Dorsolateral prefrontal cortex (tissue), 120 donors: ENCODE measurements at regions of chr6 and their contacts with region 1.

Region 1: DNA sequence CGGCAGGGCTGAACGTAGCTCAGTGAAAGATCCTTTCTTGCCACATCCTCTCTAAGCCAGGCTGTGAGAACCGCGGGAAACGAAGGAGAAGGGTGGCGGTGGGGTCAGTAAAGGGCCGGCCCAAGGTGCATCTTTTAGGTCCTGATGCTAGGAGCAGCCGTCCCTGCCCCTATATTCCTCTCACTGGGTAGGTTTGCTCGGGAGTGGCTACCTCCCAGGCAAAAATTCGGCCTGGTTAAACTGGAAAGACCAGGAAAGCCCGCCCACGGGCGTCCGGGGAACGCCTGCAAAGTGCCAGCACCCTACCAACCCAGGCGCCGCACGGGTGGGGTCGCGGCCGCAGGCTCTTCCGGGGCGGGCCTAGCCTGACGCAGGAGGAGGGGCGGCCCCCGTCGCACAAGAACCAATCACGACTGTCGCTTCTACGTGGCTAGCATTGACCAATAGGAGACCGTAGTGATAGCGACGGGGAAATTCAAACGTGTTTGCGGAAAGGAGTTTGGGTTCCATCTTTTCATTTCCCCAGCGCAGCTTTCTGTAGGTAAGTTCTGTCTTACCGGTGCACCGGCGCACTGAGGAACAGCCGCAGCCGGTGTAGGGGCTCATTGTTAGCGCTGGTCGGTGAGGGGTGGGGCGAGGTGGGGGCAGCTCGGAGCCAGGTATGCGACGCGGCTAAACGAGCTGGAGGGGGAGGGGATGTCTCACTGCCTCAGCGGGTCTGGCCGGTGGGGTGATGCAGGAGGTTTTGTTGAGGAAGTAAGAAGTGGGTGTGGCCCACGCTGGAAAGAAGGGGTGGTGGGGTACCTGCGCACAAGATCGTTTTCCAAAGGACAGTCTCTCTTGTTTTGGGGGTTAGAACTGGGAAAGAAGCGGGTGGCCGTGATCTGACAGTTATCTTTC is at the start of gene TTK:
- DNase-seq: peak; percentile 76 to 95 (median 92)
- H3K4me3 ChIP-seq: peak within 1 kb of the TSS; percentile 55 to 91 (median 79)
- H3K27ac ChIP-seq: peak within 1 kb of the TSS in 55 of 59 donors; percentile 1 to 91 (median 80)
- H3K27me3 ChIP-seq: peaks cover 0 to 3% (median 0%) of the 10 kb centered on the region in 45 donors
- CTCF ChIP-seq: peak in 7 of 56 donors; percentile 4 to 33 (median 16)
- total RNA-seq, gene TTK: 0.15 to 1.6 (median 0.45) TPM in 75 of 120 experiments, not detected in the others

Region 2: GRCh38 chr6:79841577-79842375 is 162.6 kb before region 1 on chr6:
- intact Hi-C with region 1: no loop called
- DNase-seq: no peak
- H3K4me3 ChIP-seq: no peak overlapping the region
- H3K27ac ChIP-seq: no peak overlapping the region
- H3K27me3 ChIP-seq: no peaks in the 10 kb centered on the region
- CTCF ChIP-seq: peak in 1 of 56 donors; percentile 21

Region 3: DNA sequence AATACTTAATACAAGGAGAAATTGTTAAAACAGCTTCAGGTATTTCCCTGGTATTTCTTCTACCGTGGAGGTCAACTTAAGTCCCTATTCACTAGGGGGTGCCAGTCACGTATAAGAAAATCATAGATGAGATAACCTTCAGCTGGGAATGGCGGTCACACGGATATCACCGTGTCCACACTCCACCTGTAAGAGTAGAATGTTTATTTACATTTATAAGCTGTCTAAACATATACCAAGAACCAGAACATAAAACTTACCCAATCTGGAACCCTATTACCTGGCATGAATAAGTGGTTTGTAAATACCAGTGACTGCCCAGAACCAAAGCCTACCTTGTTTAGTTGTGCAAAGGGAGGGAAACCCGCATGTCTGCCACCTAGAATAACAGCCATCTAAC is 55.2 kb before region 1 on chr6:
- intact Hi-C with region 1: loop called (anchors 5 kb)
- DNase-seq: peak in 3 of 10 donors; percentile 24 to 47 (median 32)
- H3K4me3 ChIP-seq: no peak overlapping the region
- H3K27ac ChIP-seq: no peak overlapping the region
- H3K27me3 ChIP-seq: no peaks in the 10 kb centered on the region
- CTCF ChIP-seq: peak in 55 of 56 donors; percentile 16 to 72 (median 53)

Region 4: DNA sequence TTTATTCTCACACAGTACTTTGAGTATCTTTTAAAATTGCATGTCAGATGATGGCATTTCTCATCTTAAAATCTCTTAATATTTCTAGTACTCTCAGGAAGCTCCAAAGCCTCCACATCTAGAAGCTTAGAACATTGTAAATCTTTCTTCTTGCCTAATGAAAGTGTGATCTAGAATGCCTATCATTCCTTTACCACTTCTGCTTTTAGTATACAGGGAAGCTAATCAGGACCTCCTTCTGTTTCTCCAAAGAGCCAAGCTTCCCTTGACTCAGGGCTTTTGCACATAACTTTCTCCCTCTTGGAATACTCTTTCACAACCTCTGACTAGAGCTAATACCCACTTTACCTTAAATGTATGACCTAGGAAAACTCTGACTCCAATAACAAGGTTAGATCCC is 49.6 kb before region 1 on chr6:
- intact Hi-C with region 1: loop called in 1 of 2 experiments (anchors 5 kb)
- DNase-seq: no peak
- H3K4me3 ChIP-seq: no peak overlapping the region
- H3K27ac ChIP-seq: no peak overlapping the region
- H3K27me3 ChIP-seq: no peaks in the 10 kb centered on the region
- CTCF ChIP-seq: no peak

Region 5: DNA sequence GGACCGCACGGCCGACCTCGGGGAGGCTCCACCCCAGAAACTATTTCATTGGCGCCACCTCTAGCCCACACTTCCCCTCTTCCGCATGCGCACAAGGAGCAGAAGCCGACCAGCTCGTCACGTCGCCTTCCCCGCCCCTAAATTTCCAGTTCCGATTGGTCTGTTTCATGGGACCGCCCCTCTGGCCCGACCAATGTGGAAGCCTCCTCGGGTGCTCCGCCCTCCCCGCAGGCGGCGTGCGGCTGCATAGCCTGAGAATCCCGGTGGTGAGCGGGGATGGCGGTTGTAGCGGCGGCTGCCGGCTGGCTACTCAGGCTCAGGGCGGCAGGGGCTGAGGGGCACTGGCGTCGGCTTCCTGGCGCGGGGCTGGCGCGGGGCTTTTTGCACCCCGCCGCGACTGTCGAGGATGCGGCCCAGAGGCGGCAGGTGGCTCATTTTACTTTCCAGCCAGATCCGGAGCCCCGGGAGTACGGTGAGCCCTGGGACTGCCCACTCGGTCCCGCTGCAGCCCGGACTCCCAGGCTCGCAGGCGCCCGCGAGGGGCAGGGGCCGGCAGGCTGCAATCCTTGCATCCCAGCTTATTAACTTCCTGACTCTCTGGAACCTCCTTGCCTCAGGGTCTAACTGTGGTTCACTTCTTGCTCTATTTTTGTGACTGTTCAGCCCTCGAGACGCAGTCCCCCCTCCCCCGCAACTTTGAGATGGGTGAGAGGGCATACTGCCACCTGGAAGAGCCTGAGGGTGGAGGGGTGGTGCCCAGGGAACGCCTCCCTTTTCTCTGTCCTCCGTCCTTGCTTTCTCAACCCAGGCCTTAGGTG is 102.2 kb after region 1 on chr6 and contains the start of gene BCKDHB:
- intact Hi-C with region 1: loop called (anchors 2 to 10 kb)
- DNase-seq: peak; percentile 89 to 99 (median 97)
- H3K4me3 ChIP-seq: peak within 1 kb of the TSS; percentile 72 to 99 (median 92)
- H3K27ac ChIP-seq: peak within 1 kb of the TSS in 57 of 59 donors; percentile 32 to 91 (median 80)
- H3K27me3 ChIP-seq: no peaks in the 10 kb centered on the region
- CTCF ChIP-seq: peak in 50 of 56 donors; percentile 21 to 72 (median 44)
- total RNA-seq, gene BCKDHB: 19.6 to 52.2 (median 33.4) TPM

Region 6: GRCh38 chr6:81476881-81477280 is 1472.5 kb after region 1 on chr6:
- intact Hi-C with region 1: no loop called
- DNase-seq: no peak
- H3K4me3 ChIP-seq: no peak overlapping the region
- H3K27ac ChIP-seq: no peak overlapping the region
- H3K27me3 ChIP-seq: no peaks in the 10 kb centered on the region
- CTCF ChIP-seq: no peak